ENCODE measurements at regions of chr9 and their contacts with region 1.

Region 1: DNA sequence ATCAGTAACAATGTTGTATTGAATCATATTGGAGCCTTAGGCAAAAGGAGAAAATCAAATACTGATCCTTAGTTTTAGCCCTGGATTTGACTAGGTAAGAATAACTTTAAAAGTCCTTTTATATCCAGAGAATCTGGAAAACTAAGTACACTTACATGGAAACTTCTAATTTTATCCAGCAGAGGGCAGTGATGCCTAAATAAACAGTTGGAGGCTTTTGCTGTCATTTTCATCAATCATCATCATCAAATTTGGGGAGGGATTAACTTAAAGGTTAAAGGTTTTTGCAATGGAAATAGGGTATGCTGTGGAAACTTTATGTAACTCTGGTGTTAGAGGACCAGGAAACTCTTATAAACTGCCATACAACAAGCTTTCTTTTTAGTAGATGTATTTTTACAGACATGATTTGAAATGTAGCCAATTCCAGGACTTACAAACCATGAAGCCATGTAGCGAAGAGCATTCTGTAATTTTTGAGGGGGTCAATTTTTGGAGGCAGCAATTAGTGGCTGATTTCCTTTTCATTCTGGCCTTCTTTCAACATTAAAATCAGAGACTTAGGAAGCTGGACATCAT is 112.7 kb downstream of the OSTF1 start:
- DNase-seq: peak; percentile 74
- ATAC-seq: no peak
- H3K4me3 ChIP-seq: no peak overlapping the region
- H3K27ac ChIP-seq: no peak overlapping the region
- H3K4me1 ChIP-seq: no peaks in the 10 kb centered on the region
- H3K27me3 ChIP-seq: peaks cover 8% of the 10 kb centered on the region; the same call in 1 of the 2 replicates
- CTCF ChIP-seq: peak; percentile 74

Region 2: GRCh38 chr9:75238311-75238978 is 37.5 kb after region 1 on chr9:
- CTCF ChIA-PET with region 1: interaction called, 3 read pairs
- POLR2A ChIA-PET with region 1: no interaction called
- intact Hi-C with region 1: loop called (anchors 1 kb)
- DNase-seq: peak; percentile 80
- ATAC-seq: peak; percentile 91
- H3K4me3 ChIP-seq: no peak overlapping the region
- H3K27ac ChIP-seq: no peak overlapping the region
- H3K4me1 ChIP-seq: no peaks in the 10 kb centered on the region; the same call in 1 of the 2 replicates
- H3K27me3 ChIP-seq: no peaks in the 10 kb centered on the region
- CTCF ChIP-seq: peak; percentile 64

Region 3: GRCh38 chr9:76302947-76303940 is 1102.3 kb after region 1 on chr9:
- CTCF ChIA-PET with region 1: no interaction called
- POLR2A ChIA-PET with region 1: no interaction called
- intact Hi-C with region 1: loop called (anchors 2 kb)
- DNase-seq: peak; percentile 39
- ATAC-seq: no peak
- H3K4me3 ChIP-seq: no peak overlapping the region
- H3K27ac ChIP-seq: no peak overlapping the region
- H3K4me1 ChIP-seq: no peaks in the 10 kb centered on the region
- H3K27me3 ChIP-seq: no peaks in the 10 kb centered on the region
- CTCF ChIP-seq: peak; percentile 48

Measured in PC-3 (cell line).